ENCODE measurements at regions of chr6 and their contacts with region 1.

Region 1: GRCh38 chr6:37691904-37692806 is 5.5 kb downstream of the MDGA1 start:
- DNase-seq: peak; percentile 58
- ATAC-seq: peak; percentile 84
- H3K4me3 ChIP-seq: no peak overlapping the region
- H3K27ac ChIP-seq: no peak overlapping the region
- H3K4me1 ChIP-seq: peaks cover 15% of the 10 kb centered on the region
- H3K27me3 ChIP-seq: peaks cover 5% of the 10 kb centered on the region; the same call in 1 of the 2 replicates
- CTCF ChIP-seq: peak; percentile 94
- POLR2A ChIP-seq: 0 out of 2 replicates have a peak, but pooled peaks have one; percentile 42
- RAD21 ChIP-seq: peak; percentile 97

Region 2: GRCh38 chr6:37303932-37304363 is 388.2 kb before region 1 on chr6:
- CTCF ChIA-PET with region 1: no interaction called
- POLR2A ChIA-PET with region 1: no interaction called
- dilution Hi-C with region 1: no loop called
- in situ Hi-C with region 1: no loop called
- intact Hi-C with region 1: loop called (anchors 2 kb)
- DNase-seq: peak; percentile 60
- ATAC-seq: peak; percentile 90
- H3K4me3 ChIP-seq: no peak overlapping the region
- H3K27ac ChIP-seq: no peak overlapping the region
- H3K4me1 ChIP-seq: peaks cover 7% of the 10 kb centered on the region
- H3K27me3 ChIP-seq: no peaks in the 10 kb centered on the region
- CTCF ChIP-seq: peak; percentile 64
- POLR2A ChIP-seq: no peak
- RAD21 ChIP-seq: peak; percentile 57

Region 3: GRCh38 chr6:37324131-37325033 is 367.8 kb before region 1 on chr6:
- CTCF ChIA-PET with region 1: interaction called, 4 read pairs
- POLR2A ChIA-PET with region 1: no interaction called
- dilution Hi-C with region 1: no loop called
- in situ Hi-C with region 1: no loop called
- intact Hi-C with region 1: loop called (anchors 1 kb)
- DNase-seq: peak; percentile 70
- ATAC-seq: peak; percentile 40
- H3K4me3 ChIP-seq: no peak overlapping the region
- H3K27ac ChIP-seq: no peak overlapping the region
- H3K4me1 ChIP-seq: peaks cover 3% of the 10 kb centered on the region
- H3K27me3 ChIP-seq: no peaks in the 10 kb centered on the region
- CTCF ChIP-seq: no peak
- POLR2A ChIP-seq: no peak
- RAD21 ChIP-seq: no peak

Region 4: DNA sequence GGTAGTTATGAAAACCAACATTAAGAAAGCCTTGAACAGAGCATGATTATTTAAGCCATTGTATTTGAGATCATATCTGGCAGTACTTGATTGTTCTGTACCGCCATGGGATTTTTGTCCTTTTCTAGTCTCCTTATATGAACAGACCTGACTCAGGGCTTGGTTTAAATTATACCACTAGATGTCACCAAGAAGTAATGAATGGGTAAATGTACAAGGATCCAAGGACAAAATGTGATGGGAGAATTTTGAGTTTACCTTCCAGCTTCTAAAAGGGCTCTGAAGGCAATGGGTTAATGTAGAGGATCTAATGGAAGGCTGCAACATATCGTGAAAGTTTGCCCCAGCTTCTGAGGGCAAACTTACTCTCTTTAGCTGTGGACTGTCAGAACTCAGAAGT is 326.4 kb before region 1 on chr6:
- CTCF ChIA-PET with region 1: no interaction called
- POLR2A ChIA-PET with region 1: no interaction called
- dilution Hi-C with region 1: no loop called
- in situ Hi-C with region 1: no loop called
- intact Hi-C with region 1: loop called (anchors 5 kb)
- DNase-seq: peak; percentile 35
- ATAC-seq: peak; percentile 55
- H3K4me3 ChIP-seq: no peak overlapping the region
- H3K27ac ChIP-seq: no peak overlapping the region
- H3K4me1 ChIP-seq: peaks cover 10% of the 10 kb centered on the region
- H3K27me3 ChIP-seq: no peaks in the 10 kb centered on the region
- CTCF ChIP-seq: peak; percentile 46
- POLR2A ChIP-seq: no peak
- RAD21 ChIP-seq: peak; percentile 47

Region 5: GRCh38 chr6:37483917-37484785 is 208.0 kb before region 1 on chr6:
- CTCF ChIA-PET with region 1: no interaction called
- POLR2A ChIA-PET with region 1: no interaction called
- dilution Hi-C with region 1: no loop called
- in situ Hi-C with region 1: loop called (anchors 5 kb)
- intact Hi-C with region 1: loop called (anchors 1 kb)
- DNase-seq: peak; percentile 29
- ATAC-seq: peak; percentile 94
- H3K4me3 ChIP-seq: no peak overlapping the region
- H3K27ac ChIP-seq: no peak overlapping the region
- H3K4me1 ChIP-seq: no peaks in the 10 kb centered on the region
- H3K27me3 ChIP-seq: no peaks in the 10 kb centered on the region
- CTCF ChIP-seq: peak; percentile 84
- POLR2A ChIP-seq: no peak
- RAD21 ChIP-seq: peak; percentile 89

Region 6: GRCh38 chr6:37516076-37516919 is 175.9 kb before region 1 on chr6:
- CTCF ChIA-PET with region 1: no interaction called
- POLR2A ChIA-PET with region 1: no interaction called
- dilution Hi-C with region 1: no loop called
- in situ Hi-C with region 1: no loop called
- intact Hi-C with region 1: no loop called
- DNase-seq: no peak
- ATAC-seq: no peak
- H3K4me3 ChIP-seq: no peak overlapping the region
- H3K27ac ChIP-seq: no peak overlapping the region
- H3K4me1 ChIP-seq: peaks cover 3% of the 10 kb centered on the region; the same call in 1 of the 2 replicates
- H3K27me3 ChIP-seq: peaks cover 59% of the 10 kb centered on the region
- CTCF ChIP-seq: no peak
- POLR2A ChIP-seq: no peak
- RAD21 ChIP-seq: no peak

Region 7: GRCh38 chr6:37607944-37608343 is 84.2 kb before region 1 on chr6:
- CTCF ChIA-PET with region 1: interaction called, 8 read pairs
- POLR2A ChIA-PET with region 1: no interaction called
- dilution Hi-C with region 1: no loop called
- in situ Hi-C with region 1: no loop called
- intact Hi-C with region 1: loop called (anchors 5 kb)
- DNase-seq: peak; percentile 57
- ATAC-seq: peak; percentile 76
- H3K4me3 ChIP-seq: no peak overlapping the region
- H3K27ac ChIP-seq: no peak overlapping the region
- H3K4me1 ChIP-seq: no peaks in the 10 kb centered on the region
- H3K27me3 ChIP-seq: peaks cover 33% of the 10 kb centered on the region
- CTCF ChIP-seq: peak; percentile 58
- POLR2A ChIP-seq: no peak
- RAD21 ChIP-seq: peak; percentile 50

Measured in IMR-90 (cell line).